ENCODE measurements at regions of chr11 and their contacts with region 1.

Region 1: GRCh38 chr11:2305140-2305840 is 3.5 kb downstream of the TSPAN32 start:
- DNase-seq: peak; percentile 38 to 96
- H3K4me3 ChIP-seq: no peak overlapping the region
- H3K27ac ChIP-seq: no peak overlapping the region
- H3K4me1 ChIP-seq: peaks cover 0 to 3% (median 0%) of the 10 kb centered on the region in 4 experiments; a peak in 1 of 7 replicates
- H3K27me3 ChIP-seq: no peaks in the 10 kb centered on the region
- CTCF ChIP-seq: peak; percentile 89 to 94 (median 94)
- EP300 ChIP-seq: no peak
- POLR2A ChIP-seq: no peak
- RAD21 ChIP-seq: peak; percentile 89 to 91

Region 2: GRCh38 chr11:2178906-2179494 is 126.3 kb before region 1 on chr11:
- CTCF ChIA-PET with region 1: interaction called, 11 read pairs
- POLR2A ChIA-PET with region 1: no interaction called
- DNase-seq: no peak
- H3K4me3 ChIP-seq: no peak overlapping the region
- H3K27ac ChIP-seq: no peak overlapping the region
- H3K4me1 ChIP-seq: no peaks in the 10 kb centered on the region
- H3K27me3 ChIP-seq: no peaks in the 10 kb centered on the region
- CTCF ChIP-seq: no peak
- EP300 ChIP-seq: no peak
- POLR2A ChIP-seq: no peak
- RAD21 ChIP-seq: no peak

Region 3: GRCh38 chr11:2208691-2209369 is 96.5 kb before region 1 on chr11:
- CTCF ChIA-PET with region 1: interaction called, 248 read pairs
- POLR2A ChIA-PET with region 1: interaction called, 3 read pairs
- DNase-seq: peak in 1 of 2 experiments; percentile 48
- H3K4me3 ChIP-seq: no peak overlapping the region
- H3K27ac ChIP-seq: no peak overlapping the region
- H3K4me1 ChIP-seq: peaks cover 5 to 11% (median 8%) of the 10 kb centered on the region in 4 experiments
- H3K27me3 ChIP-seq: peaks cover 0 to 6% (median 1%) of the 10 kb centered on the region in 4 experiments; a peak in 4 of 7 replicates
- CTCF ChIP-seq: peak; percentile 25 to 48 (median 47)
- EP300 ChIP-seq: no peak
- POLR2A ChIP-seq: no peak
- RAD21 ChIP-seq: peak; percentile 45 to 52

Region 4: GRCh38 chr11:2382936-2383851 is 77.9 kb after region 1 on chr11:
- CTCF ChIA-PET with region 1: interaction called, 29 read pairs
- POLR2A ChIA-PET with region 1: interaction called, 13 read pairs
- DNase-seq: no peak
- H3K4me3 ChIP-seq: no peak overlapping the region
- H3K27ac ChIP-seq: no peak overlapping the region
- H3K4me1 ChIP-seq: peaks cover 0 to 14% (median 4%) of the 10 kb centered on the region in 4 experiments; a peak in 5 of 7 replicates
- H3K27me3 ChIP-seq: no peaks in the 10 kb centered on the region
- CTCF ChIP-seq: no peak
- EP300 ChIP-seq: no peak
- POLR2A ChIP-seq: no peak
- RAD21 ChIP-seq: 0 out of 4 replicates have a peak, but pooled peaks of 1 of the 2 experiments have one; percentile 3

Region 5: GRCh38 chr11:2409611-2410468 is 104.5 kb after region 1 on chr11:
- CTCF ChIA-PET with region 1: interaction called, 64 read pairs
- POLR2A ChIA-PET with region 1: interaction called, 3 read pairs
- DNase-seq: no peak
- H3K4me3 ChIP-seq: no peak overlapping the region
- H3K27ac ChIP-seq: no peak overlapping the region
- H3K4me1 ChIP-seq: no peaks in the 10 kb centered on the region
- H3K27me3 ChIP-seq: no peaks in the 10 kb centered on the region; a peak in 1 of 7 replicates
- CTCF ChIP-seq: no peak
- EP300 ChIP-seq: no peak
- POLR2A ChIP-seq: no peak
- RAD21 ChIP-seq: no peak

Measured in H1 (cell line).